ENCODE measurements at regions of chr17 and their contacts with region 1.

Region 1: GRCh38 chr17:76191896-76192295 is 48.4 kb downstream of the RNF157 start:
- DNase-seq: peak; percentile 80 to 90 (median 86)
- H3K4me3 ChIP-seq: peak overlapping the region in 1 of 2 donors; percentile 19
- H3K4me3 Mint-ChIP-seq: peak overlapping the region; percentile 33 to 87 (median 80)
- H3K27ac ChIP-seq: peak overlapping the region; percentile 66
- H3K27ac Mint-ChIP-seq: peak overlapping the region; percentile 94 to 98 (median 95)
- H3K4me1 ChIP-seq: peaks cover 98% of the 10 kb centered on the region
- H3K4me1 Mint-ChIP-seq: peaks cover 58 to 87% (median 75%) of the 10 kb centered on the region in 4 donors
- H3K27me3 ChIP-seq: no peaks in the 10 kb centered on the region
- H3K27me3 Mint-ChIP-seq: no peaks in the 10 kb centered on the region

Region 2: GRCh38 chr17:76141212-76142038 is 50.5 kb before region 1 on chr17 and contains the start of gene FOXJ1:
- CTCF ChIA-PET with region 1: interaction called, 4 read pairs
- POLR2A ChIA-PET with region 1: interaction called, 20 read pairs
- intact Hi-C with region 1: no loop called
- DNase-seq: peak; percentile 90 to 93 (median 92)
- H3K4me3 ChIP-seq: peak within 1 kb of the TSS; percentile 19 to 48
- H3K4me3 Mint-ChIP-seq: peak within 1 kb of the TSS; percentile 75 to 94 (median 84)
- H3K27ac ChIP-seq: no peak within 1 kb of the TSS
- H3K27ac Mint-ChIP-seq: peak within 1 kb of the TSS; percentile 78 to 96 (median 85)
- H3K4me1 ChIP-seq: peaks cover 66% of the 10 kb centered on the region
- H3K4me1 Mint-ChIP-seq: peaks cover 39 to 63% (median 50%) of the 10 kb centered on the region in 4 donors
- H3K27me3 ChIP-seq: peaks cover 4% of the 10 kb centered on the region
- H3K27me3 Mint-ChIP-seq: peaks cover 3% of the 10 kb centered on the region in 2 donors
- total RNA-seq, gene FOXJ1: 0.19 to 0.20 TPM

Region 3: DNA sequence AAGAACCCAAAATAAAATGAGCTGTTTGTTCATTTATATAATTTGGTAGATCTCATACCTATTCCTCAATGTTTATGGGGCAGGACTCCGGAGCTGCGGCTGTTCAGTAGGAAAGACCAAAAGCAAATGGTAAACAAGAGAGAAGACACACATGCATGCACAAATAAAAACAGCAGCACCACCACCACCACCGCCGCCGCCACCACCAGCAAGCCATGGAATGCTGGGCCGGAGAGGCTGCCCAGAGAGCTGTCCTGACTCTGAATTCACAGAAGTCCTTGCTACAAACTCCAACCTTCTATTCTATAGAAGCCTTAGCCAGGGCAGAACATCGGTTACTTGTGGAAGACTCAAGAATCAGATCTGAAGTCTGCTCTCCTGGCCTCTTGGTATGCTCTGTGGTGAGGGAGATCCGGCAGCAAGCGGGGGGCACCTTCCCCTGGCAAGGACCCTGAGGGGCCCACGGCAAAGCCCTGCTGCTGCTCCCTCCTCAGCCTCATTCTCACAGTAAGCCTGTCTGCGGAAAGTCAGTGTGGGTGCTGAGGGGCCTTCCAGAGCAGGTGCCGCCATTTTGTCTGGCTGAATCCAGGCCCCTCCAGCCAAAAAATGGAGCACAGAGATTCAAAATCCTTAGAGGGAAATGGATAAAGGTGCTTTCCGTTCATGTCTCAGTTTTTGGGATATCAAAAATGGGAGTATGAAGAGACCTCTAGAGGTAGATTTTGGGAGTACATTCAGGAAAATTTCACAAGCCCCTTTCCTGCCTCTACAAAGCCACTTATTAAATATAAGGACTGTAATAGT is 44.5 kb before region 1 on chr17:
- CTCF ChIA-PET with region 1: interaction called, 4 read pairs
- POLR2A ChIA-PET with region 1: interaction called, 20 read pairs
- intact Hi-C with region 1: no loop called
- DNase-seq: no peak
- H3K4me3 ChIP-seq: no peak overlapping the region
- H3K4me3 Mint-ChIP-seq: no peak overlapping the region
- H3K27ac ChIP-seq: no peak overlapping the region
- H3K27ac Mint-ChIP-seq: peak overlapping the region; percentile 31 to 99 (median 64)
- H3K4me1 ChIP-seq: peaks cover 63% of the 10 kb centered on the region
- H3K4me1 Mint-ChIP-seq: peaks cover 43 to 77% (median 60%) of the 10 kb centered on the region in 4 donors
- H3K27me3 ChIP-seq: no peaks in the 10 kb centered on the region
- H3K27me3 Mint-ChIP-seq: no peaks in the 10 kb centered on the region

Region 4: GRCh38 chr17:76153640-76154039 is 38.3 kb before region 1 on chr17:
- CTCF ChIA-PET with region 1: no interaction called
- POLR2A ChIA-PET with region 1: interaction called, 10 read pairs
- intact Hi-C with region 1: no loop called
- DNase-seq: no peak
- H3K4me3 ChIP-seq: no peak overlapping the region
- H3K4me3 Mint-ChIP-seq: no peak overlapping the region
- H3K27ac ChIP-seq: no peak overlapping the region
- H3K27ac Mint-ChIP-seq: peak overlapping the region in 6 of 7 donors; percentile 22 to 79 (median 65)
- H3K4me1 ChIP-seq: peaks cover 24% of the 10 kb centered on the region
- H3K4me1 Mint-ChIP-seq: peaks cover 29 to 49% (median 35%) of the 10 kb centered on the region in 4 donors
- H3K27me3 ChIP-seq: no peaks in the 10 kb centered on the region
- H3K27me3 Mint-ChIP-seq: no peaks in the 10 kb centered on the region

Region 5: DNA sequence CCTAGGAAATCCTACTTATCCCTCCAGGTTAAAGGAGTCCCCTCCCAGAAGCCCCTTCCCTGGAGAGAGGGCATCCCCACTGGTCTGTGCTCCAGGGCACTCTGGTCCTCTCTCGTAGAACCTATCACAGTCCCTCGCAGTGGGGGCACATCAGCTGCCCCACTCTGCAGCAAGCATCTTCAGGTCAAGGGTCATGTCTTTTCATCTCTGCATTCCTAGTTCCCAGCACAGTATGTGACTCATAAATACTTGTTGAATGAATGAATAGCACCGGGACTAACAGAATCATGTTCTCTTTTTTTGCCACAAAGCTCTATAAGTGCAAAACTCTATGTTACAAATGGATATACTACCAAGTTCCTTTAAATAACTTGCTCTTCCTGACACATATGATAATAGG is 12.4 kb after region 1 on chr17:
- CTCF ChIA-PET with region 1: interaction called, 16 read pairs
- POLR2A ChIA-PET with region 1: interaction called, 44 read pairs
- intact Hi-C with region 1: no loop called
- DNase-seq: no peak
- H3K4me3 ChIP-seq: no peak overlapping the region
- H3K4me3 Mint-ChIP-seq: no peak overlapping the region
- H3K27ac ChIP-seq: no peak overlapping the region
- H3K27ac Mint-ChIP-seq: peak overlapping the region in 4 of 7 donors; percentile 53 to 70 (median 56)
- H3K4me1 ChIP-seq: peaks cover 73% of the 10 kb centered on the region
- H3K4me1 Mint-ChIP-seq: peaks cover 41 to 75% (median 63%) of the 10 kb centered on the region in 4 donors
- H3K27me3 ChIP-seq: no peaks in the 10 kb centered on the region
- H3K27me3 Mint-ChIP-seq: no peaks in the 10 kb centered on the region

Region 6: GRCh38 chr17:76240461-76241203 is 48.7 kb after region 1 on chr17 and contains the start of gene RNF157:
- CTCF ChIA-PET with region 1: interaction called, 9 read pairs
- POLR2A ChIA-PET with region 1: interaction called, 29 read pairs
- intact Hi-C with region 1: loop called (anchors 5 kb)
- DNase-seq: peak; percentile 61 to 76 (median 72)
- H3K4me3 ChIP-seq: peak within 1 kb of the TSS; percentile 70 to 71
- H3K4me3 Mint-ChIP-seq: peak within 1 kb of the TSS; percentile 89 to 98 (median 92)
- H3K27ac ChIP-seq: peak within 1 kb of the TSS; percentile 50
- H3K27ac Mint-ChIP-seq: peak within 1 kb of the TSS; percentile 86 to 96 (median 93)
- H3K4me1 ChIP-seq: peaks cover 51% of the 10 kb centered on the region
- H3K4me1 Mint-ChIP-seq: peaks cover 19 to 72% (median 47%) of the 10 kb centered on the region in 4 donors
- H3K27me3 ChIP-seq: no peaks in the 10 kb centered on the region
- H3K27me3 Mint-ChIP-seq: no peaks in the 10 kb centered on the region
- total RNA-seq, gene RNF157: 19.5 to 22.5 TPM

Region 7: DNA sequence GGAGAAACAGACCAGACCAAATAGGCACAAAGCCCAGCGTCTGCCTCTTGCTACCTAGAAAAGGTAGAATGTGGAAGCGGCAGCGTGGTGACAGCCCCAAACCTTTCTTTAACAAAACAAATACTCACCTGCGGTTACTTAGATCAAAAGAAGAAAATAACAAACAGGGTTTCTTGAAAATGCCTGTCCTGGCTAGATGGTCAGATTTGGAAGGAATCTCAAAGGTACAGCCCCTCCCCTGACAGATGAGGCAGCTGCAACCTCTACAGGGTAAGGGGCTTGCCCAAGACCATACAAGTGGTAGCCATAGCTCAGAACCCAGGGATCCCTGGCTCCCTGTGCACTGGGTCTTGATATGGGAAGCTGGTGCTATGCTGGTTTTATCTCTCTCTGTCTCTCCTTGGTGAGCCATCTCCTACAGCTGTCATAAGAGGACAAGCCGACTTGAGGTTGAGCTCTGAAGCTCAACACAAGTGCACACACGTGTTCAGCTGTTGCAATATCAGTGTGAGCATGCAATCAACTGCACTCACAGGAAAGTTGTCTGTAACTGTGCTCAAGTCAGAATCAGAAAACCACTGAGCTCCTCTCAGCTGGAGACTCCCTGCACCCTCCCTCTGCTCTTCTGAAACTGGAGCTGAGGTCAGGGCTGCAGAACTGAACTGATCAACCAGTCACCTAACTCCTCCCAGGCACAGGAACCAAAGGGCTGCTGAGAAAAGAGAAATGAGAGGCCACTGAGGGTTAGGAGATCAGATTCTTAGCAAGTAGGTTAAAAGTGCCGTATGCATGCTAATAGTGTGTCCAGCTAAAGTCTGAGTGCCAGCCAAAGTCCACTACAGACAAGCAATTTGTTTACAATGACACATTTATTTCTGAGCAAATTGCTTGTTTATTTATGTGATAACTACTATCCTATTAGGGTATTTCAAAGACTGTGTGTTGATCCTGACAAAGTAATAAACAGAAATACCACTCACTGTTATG is 54.5 kb after region 1 on chr17:
- CTCF ChIA-PET with region 1: interaction called, 9 read pairs
- POLR2A ChIA-PET with region 1: interaction called, 29 read pairs
- intact Hi-C with region 1: no loop called
- DNase-seq: peak; percentile 47 to 61 (median 58)
- H3K4me3 ChIP-seq: peak overlapping the region in 1 of 2 donors; percentile 11
- H3K4me3 Mint-ChIP-seq: peak overlapping the region in 7 of 8 donors; percentile 59 to 85 (median 83)
- H3K27ac ChIP-seq: peak overlapping the region; percentile 25
- H3K27ac Mint-ChIP-seq: peak overlapping the region; percentile 71 to 94 (median 91)
- H3K4me1 ChIP-seq: peaks cover 67% of the 10 kb centered on the region
- H3K4me1 Mint-ChIP-seq: peaks cover 18 to 81% (median 50%) of the 10 kb centered on the region in 4 donors
- H3K27me3 ChIP-seq: no peaks in the 10 kb centered on the region
- H3K27me3 Mint-ChIP-seq: no peaks in the 10 kb centered on the region

Measured in CD4-positive, alpha-beta memory T cell (primary cell).